T-cell (primary cell): ENCODE measurements at regions of chr2 and their contacts with region 1.

Region 1: GRCh38 chr2:88658890-88659537 is 31.8 kb upstream of the EIF2AK3 start:
- DNase-seq: no peak
- ATAC-seq: no peak
- H3K4me3 ChIP-seq: no peak overlapping the region
- H3K4me3 Mint-ChIP-seq: no peak overlapping the region
- H3K27ac ChIP-seq: no peak overlapping the region
- H3K27ac Mint-ChIP-seq: no peak overlapping the region
- H3K4me1 ChIP-seq: no peaks in the 10 kb centered on the region
- H3K4me1 Mint-ChIP-seq: no peaks in the 10 kb centered on the region
- H3K27me3 ChIP-seq: no peaks in the 10 kb centered on the region
- H3K27me3 Mint-ChIP-seq: no peaks in the 10 kb centered on the region

Region 2: DNA sequence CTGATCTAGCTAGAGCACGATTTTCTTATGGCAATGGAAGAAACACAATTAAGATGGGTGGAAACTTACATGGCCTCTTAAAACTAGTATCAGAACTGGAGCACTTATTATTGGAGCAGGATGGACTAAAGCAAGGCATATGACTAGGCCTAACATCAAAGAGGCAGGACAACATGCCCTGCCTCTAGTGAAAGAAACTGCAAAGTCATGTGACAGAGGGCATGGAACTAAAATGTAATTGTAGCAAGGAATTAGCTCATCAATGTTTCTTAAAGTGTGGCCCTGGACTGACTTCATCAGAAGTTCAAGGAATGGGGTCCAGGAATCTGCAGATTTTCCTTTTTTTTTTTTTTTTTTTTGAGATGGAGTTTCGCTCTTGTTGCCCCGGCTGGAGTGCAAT is 26.4 kb before region 1 on chr2:
- CTCF ChIA-PET with region 1: no interaction called
- POLR2A ChIA-PET with region 1: interaction called in 1 of 2 experiments, 14 read pairs
- DNase-seq: no peak
- ATAC-seq: no peak
- H3K4me3 ChIP-seq: no peak overlapping the region
- H3K4me3 Mint-ChIP-seq: no peak overlapping the region
- H3K27ac ChIP-seq: no peak overlapping the region
- H3K27ac Mint-ChIP-seq: no peak overlapping the region
- H3K4me1 ChIP-seq: peaks cover 5 to 8% of the 10 kb centered on the region in 2 experiments
- H3K4me1 Mint-ChIP-seq: peaks cover 0 to 13% (median 6%) of the 10 kb centered on the region in 3 donors
- H3K27me3 ChIP-seq: no peaks in the 10 kb centered on the region
- H3K27me3 Mint-ChIP-seq: peaks cover 0 to 3% of the 10 kb centered on the region in 2 donors